Panc1 (cell line): ENCODE measurements at regions of chr7 and their contacts with region 1.

Region 1: GRCh38 chr7:98106647-98107445 is at the start of gene LMTK2:
- DNase-seq: no peak
- ATAC-seq: peak; percentile 100
- H3K4me3 ChIP-seq: peak within 1 kb of the TSS; percentile 85 to 90
- H3K27ac ChIP-seq: peak within 1 kb of the TSS; percentile 77
- H3K4me1 ChIP-seq: peaks cover 26% of the 10 kb centered on the region
- H3K27me3 ChIP-seq: no peaks in the 10 kb centered on the region
- CTCF ChIP-seq: peak; percentile 99
- total RNA-seq, gene LMTK2: 25.4 TPM

Region 2: DNA sequence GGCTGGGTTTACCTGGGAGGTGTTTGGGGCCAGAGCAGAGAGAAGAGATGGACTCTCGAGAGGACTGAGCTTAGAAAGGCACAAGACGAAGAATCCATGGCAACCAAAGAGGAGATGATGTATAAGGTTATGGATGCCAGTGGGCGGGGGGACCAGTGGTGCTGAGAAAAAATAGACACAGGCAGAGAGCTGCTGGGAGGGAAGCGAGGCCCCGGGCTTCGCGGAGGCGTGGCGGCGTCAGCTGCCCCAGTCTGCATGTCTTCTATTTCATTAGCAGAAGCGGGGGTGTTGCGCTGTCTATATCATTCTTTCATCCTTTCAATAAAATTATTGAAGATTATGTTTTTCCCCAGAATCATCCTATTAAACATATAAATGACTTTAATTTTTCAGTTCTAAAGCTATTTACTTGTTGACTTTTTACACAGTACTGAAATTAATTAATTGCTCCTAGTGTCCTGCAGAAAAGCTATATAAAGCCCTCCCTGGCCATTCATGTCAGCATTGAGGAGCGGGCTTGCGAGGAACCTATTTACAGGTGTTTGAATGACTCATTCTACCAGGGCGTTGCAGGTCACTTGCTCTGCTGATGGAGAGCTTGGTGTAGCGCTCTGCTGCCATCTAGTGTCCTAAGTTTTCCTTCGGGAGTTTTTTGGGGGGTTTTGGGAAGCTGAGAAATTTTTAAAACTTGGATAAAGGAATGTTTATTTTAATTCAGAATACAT is 61.5 kb after region 1 on chr7:
- CTCF ChIA-PET with region 1: interaction called, 8 read pairs
- POLR2A ChIA-PET with region 1: interaction called, 3 read pairs
- in situ Hi-C with region 1: no loop called
- intact Hi-C with region 1: loop called (anchors 1 kb)
- DNase-seq: peak; percentile 61
- ATAC-seq: peak; percentile 71
- H3K4me3 ChIP-seq: no peak overlapping the region
- H3K27ac ChIP-seq: no peak overlapping the region
- H3K4me1 ChIP-seq: peaks cover 5% of the 10 kb centered on the region
- H3K27me3 ChIP-seq: no peaks in the 10 kb centered on the region
- CTCF ChIP-seq: peak; percentile 93